Activated naive CD4-positive, alpha-beta T cell treated with anti-CD3 and anti-CD28 coated beads, Interleukin-2, amount 10 ng/mL, durations not matched to agents 7 days and 5 days (primary cell): ENCODE measurements at regions of chr1 and their contacts with region 1.

Region 1: DNA sequence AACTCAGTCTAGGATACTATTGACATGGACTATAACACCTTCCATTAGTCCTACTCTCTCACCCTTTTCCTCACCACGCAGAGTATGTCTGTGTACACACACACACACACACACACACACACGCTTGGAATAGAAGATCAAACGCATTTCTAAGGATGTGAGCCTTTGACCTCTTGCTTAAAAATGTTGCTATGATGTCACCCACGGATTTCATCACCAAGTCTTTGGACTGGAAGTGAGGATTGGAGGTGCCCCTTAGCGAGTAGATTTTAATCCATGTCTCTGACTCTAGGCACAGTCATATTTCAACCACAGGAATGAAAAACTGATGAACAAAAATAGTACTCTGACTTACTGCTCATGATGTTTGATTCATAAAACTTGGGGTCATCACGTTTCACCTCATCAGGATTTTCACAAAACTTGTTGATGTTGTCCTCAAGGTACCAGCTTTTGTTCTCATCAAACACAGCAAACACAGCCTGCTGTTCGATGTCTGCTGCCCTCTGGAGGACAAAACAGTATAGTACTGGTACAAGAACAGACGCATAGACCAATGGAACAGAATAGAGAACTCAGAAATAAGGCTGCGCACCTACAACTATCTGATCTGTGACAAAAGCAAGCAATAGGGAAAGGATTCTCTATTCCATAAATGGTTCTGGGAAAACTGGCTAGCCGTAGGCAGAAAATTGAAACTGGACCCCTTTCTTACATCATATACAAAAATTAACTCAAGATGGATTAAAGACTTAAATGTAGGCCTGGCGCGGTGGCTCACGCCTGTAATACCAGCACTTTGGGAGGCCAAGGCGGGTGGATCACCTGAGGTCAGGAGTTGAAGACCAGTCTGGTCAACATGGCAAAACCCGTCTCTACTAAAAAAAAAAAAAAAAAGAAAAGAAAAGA is 39.9 kb downstream of the F5 start:
- DNase-seq: peak; percentile 68
- H3K4me3 Mint-ChIP-seq: no peak overlapping the region
- H3K27ac Mint-ChIP-seq: no peak overlapping the region
- H3K4me1 Mint-ChIP-seq: no peaks in the 10 kb centered on the region
- H3K27me3 Mint-ChIP-seq: no peaks in the 10 kb centered on the region

Region 2: DNA sequence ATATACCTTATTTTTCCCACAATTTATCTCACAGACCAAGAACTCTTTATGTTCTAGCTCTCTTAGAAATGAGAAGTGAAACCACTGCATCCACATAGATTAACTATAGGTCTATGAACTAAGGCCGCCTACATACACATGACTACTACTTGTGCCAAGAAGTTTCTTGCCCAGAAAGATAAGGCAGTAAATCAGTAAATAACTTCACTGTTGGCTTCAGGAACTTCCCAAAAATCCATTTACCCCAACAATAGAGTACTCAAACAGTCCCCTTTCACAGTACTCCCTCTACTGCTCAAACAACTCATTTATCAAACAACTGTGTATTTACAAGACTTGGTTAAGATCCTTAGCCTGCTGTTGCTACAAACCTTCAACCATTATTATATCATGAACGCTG is 275.2 kb before region 1 on chr1:
- CTCF ChIA-PET with region 1: no interaction called
- DNase-seq: no peak
- H3K4me3 Mint-ChIP-seq: no peak overlapping the region
- H3K27ac Mint-ChIP-seq: no peak overlapping the region
- H3K4me1 Mint-ChIP-seq: no peaks in the 10 kb centered on the region
- H3K27me3 Mint-ChIP-seq: no peaks in the 10 kb centered on the region

Region 3: GRCh38 chr1:169348383-169349036 is 197.8 kb before region 1 on chr1:
- CTCF ChIA-PET with region 1: interaction called, 11 read pairs
- DNase-seq: no peak
- H3K4me3 Mint-ChIP-seq: no peak overlapping the region
- H3K27ac Mint-ChIP-seq: no peak overlapping the region
- H3K4me1 Mint-ChIP-seq: peaks cover 2% of the 10 kb centered on the region
- H3K27me3 Mint-ChIP-seq: peaks cover 4% of the 10 kb centered on the region

Region 4: DNA sequence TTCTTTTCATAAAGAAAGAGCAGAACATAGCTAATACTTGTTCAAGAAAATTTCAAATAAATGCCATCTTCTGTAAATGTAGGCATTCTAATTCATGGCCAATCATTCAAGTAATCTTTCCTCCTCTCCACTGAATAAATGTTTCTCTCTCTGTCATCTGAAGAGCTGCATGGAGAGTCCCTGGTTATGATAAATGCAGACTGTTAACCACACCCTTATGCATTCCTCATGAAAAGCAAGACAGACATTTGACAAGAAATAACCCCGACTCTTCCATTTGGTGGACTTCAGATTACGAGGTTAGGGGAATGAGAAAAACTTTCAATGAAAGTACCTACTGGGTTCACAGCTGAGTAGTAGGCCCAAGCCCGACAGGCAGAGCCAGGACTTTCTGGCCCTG is 15.9 kb before region 1 on chr1:
- CTCF ChIA-PET with region 1: interaction called, 10 read pairs
- DNase-seq: no peak
- H3K4me3 Mint-ChIP-seq: no peak overlapping the region
- H3K27ac Mint-ChIP-seq: no peak overlapping the region
- H3K4me1 Mint-ChIP-seq: peaks cover 22% of the 10 kb centered on the region
- H3K27me3 Mint-ChIP-seq: no peaks in the 10 kb centered on the region

Region 5: GRCh38 chr1:169586395-169587255 is 40.3 kb after region 1 on chr1 and contains the start of gene F5:
- CTCF ChIA-PET with region 1: interaction called, 12 read pairs
- DNase-seq: peak; percentile 86
- H3K4me3 Mint-ChIP-seq: peak within 1 kb of the TSS; percentile 84
- H3K27ac Mint-ChIP-seq: peak within 1 kb of the TSS; percentile 78
- H3K4me1 Mint-ChIP-seq: peaks cover 72% of the 10 kb centered on the region
- H3K27me3 Mint-ChIP-seq: no peaks in the 10 kb centered on the region

Region 6: GRCh38 chr1:169711469-169712281 is 165.3 kb after region 1 on chr1 and contains the start of gene SELL:
- CTCF ChIA-PET with region 1: interaction called, 28 read pairs
- DNase-seq: peak; percentile 86
- H3K4me3 Mint-ChIP-seq: peak within 1 kb of the TSS; percentile 88
- H3K27ac Mint-ChIP-seq: peak within 1 kb of the TSS; percentile 91
- H3K4me1 Mint-ChIP-seq: peaks cover 20% of the 10 kb centered on the region
- H3K27me3 Mint-ChIP-seq: peaks cover 11% of the 10 kb centered on the region